ENCODE measurements at regions of chr21 and their contacts with region 1.

Region 1: GRCh38 chr21:36209626-36210171 is 53.1 kb downstream of the DOP1B start:
- DNase-seq: peak; percentile 73
- H3K4me3 ChIP-seq: peak overlapping the region in 2 of 3 experiments; percentile 8 to 14
- H3K27ac ChIP-seq: peak overlapping the region; percentile 60
- H3K4me1 ChIP-seq: peaks cover 42% of the 10 kb centered on the region
- H3K27me3 ChIP-seq: no peaks in the 10 kb centered on the region
- CTCF ChIP-seq: peak; percentile 60 to 77

Region 2: GRCh38 chr21:36149788-36150711 is 59.6 kb before region 1 on chr21:
- CTCF ChIA-PET with region 1: interaction called, 4 read pairs
- dilution Hi-C with region 1: no loop called
- in situ Hi-C with region 1: loop called (anchors 5 kb)
- intact Hi-C with region 1: loop called (anchors 1 kb)
- DNase-seq: no peak
- H3K4me3 ChIP-seq: no peak overlapping the region
- H3K27ac ChIP-seq: no peak overlapping the region
- H3K4me1 ChIP-seq: no peaks in the 10 kb centered on the region
- H3K27me3 ChIP-seq: no peaks in the 10 kb centered on the region
- CTCF ChIP-seq: no peak

Region 3: GRCh38 chr21:36163750-36164741 is 45.7 kb before region 1 on chr21:
- CTCF ChIA-PET with region 1: no interaction called
- dilution Hi-C with region 1: loop called (anchors 10 kb)
- in situ Hi-C with region 1: loop called in 1 of 2 experiments (anchors 5 kb)
- intact Hi-C with region 1: no loop called
- DNase-seq: no peak
- H3K4me3 ChIP-seq: no peak overlapping the region
- H3K27ac ChIP-seq: no peak overlapping the region
- H3K4me1 ChIP-seq: no peaks in the 10 kb centered on the region
- H3K27me3 ChIP-seq: no peaks in the 10 kb centered on the region
- CTCF ChIP-seq: no peak

Region 4: DNA sequence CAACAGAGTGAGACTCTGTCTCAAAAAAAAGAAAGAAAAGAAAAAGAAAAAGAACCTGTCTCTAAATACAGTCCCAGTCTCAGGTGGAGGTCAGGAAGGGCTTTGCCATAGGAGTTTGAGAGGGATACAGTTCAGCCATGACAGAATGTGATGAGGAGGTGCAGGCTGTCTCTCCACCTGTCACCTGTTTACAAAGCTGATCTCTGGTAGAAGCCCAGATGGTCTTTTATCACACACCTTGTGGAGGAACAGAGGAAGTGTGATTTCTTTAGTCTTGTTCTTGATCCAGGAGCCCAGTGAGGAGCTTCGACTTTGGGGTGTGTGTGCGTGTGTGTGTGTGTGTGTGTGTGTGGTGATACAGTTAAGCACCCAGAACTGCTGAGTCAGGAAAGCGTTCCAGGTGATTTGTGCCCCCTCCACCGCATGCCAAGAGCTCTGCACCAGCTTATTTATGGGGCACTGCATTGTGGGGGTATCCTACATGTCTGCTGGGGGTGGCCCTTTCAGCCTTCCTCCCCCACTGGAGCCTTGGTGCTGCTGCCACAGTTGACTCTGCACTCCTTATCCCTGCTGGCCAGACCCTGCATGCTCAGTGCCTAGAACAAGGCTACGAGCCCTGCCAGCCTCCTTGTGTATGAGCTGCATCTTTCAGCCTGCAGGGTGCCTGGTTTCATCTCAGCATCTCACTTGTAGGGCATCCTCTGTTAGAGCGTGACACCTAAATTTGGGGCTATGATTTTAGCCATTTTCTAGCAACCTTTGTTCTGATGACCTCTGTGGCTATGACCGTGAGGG is 33.7 kb before region 1 on chr21:
- CTCF ChIA-PET with region 1: no interaction called
- dilution Hi-C with region 1: no loop called
- in situ Hi-C with region 1: no loop called
- intact Hi-C with region 1: no loop called
- DNase-seq: no peak
- H3K4me3 ChIP-seq: no peak overlapping the region
- H3K27ac ChIP-seq: no peak overlapping the region
- H3K4me1 ChIP-seq: no peaks in the 10 kb centered on the region
- H3K27me3 ChIP-seq: no peaks in the 10 kb centered on the region
- CTCF ChIP-seq: no peak

Region 5: DNA sequence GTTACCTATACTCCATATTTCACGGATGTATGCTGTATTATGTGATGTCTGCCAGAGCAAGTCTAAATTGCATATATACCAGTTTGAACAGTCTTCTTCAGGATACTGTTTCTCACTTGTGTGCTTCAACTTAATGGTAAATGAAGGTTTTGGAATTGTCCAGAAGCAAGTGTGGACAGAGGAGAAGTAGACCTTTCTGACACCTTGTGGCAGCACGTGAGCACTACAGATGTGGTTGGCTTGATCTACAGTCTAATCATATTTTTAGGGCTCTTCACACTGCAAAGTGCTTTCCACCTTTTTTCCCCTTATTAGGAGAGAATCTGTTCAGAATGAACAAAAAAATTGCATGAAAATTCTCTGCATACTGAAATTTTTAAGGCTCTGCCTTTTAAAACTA is 121.2 kb after region 1 on chr21:
- CTCF ChIA-PET with region 1: no interaction called
- dilution Hi-C with region 1: no loop called
- in situ Hi-C with region 1: loop called in 1 of 2 experiments (anchors 5 kb)
- intact Hi-C with region 1: loop called (anchors 2 kb)
- DNase-seq: peak; percentile 36
- H3K4me3 ChIP-seq: no peak overlapping the region
- H3K27ac ChIP-seq: no peak overlapping the region
- H3K4me1 ChIP-seq: peaks cover 4% of the 10 kb centered on the region
- H3K27me3 ChIP-seq: no peaks in the 10 kb centered on the region
- CTCF ChIP-seq: peak; percentile 74 to 85